ENCODE measurements at regions of chr6 and their contacts with region 1.

Region 1: DNA sequence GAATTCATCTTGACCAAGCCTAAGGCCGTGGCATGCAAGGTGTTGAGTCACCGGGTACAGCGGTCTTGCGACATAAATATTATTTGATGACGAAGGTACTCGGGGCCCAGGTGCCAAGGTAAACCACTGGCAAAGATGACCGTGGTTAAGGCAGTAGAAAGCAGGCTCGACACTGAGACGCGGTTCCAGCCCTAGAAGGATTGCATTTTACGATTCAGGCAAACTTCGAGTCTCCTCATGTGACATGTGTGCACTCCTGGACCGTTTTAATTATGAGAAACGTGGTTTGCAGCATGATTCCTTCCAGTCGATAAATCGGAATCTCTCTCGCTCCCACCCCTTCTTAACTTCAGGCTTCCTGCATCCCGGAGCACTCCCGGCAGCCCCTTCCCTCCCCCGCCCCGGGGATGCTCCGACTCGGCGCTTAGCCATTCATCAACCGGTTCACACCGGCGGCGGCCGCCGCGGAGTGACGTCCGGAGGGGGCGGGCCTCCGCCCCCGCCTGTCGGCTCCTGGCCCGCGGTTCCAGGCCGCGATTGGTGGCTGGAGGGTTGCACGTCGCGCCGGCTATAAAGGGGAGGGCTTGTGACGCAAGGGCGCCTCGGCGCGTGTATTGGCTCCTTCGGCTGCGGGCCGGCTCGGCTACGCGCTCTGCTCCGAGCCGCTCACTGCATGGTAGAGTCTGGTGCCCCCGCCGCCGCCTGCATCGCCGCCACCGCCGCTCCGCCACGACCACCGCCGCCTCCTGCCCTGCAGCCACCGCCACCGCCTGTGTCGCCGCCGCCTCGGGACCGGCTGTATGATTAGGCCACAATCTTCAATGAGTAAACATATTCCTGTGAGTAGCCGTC is at the starts of genes LOC128125822 and PTP4A1:
- DNase-seq: peak; percentile 96
- H3K4me3 Mint-ChIP-seq: peak within 1 kb of the TSS; percentile 95
- H3K27ac Mint-ChIP-seq: peak within 1 kb of the TSS; percentile 95
- H3K4me1 Mint-ChIP-seq: peaks cover 36% of the 10 kb centered on the region
- H3K27me3 Mint-ChIP-seq: no peaks in the 10 kb centered on the region
- total RNA-seq, gene PTP4A1: 80.0 and 84.7 TPM in 2 replicates

Region 2: DNA sequence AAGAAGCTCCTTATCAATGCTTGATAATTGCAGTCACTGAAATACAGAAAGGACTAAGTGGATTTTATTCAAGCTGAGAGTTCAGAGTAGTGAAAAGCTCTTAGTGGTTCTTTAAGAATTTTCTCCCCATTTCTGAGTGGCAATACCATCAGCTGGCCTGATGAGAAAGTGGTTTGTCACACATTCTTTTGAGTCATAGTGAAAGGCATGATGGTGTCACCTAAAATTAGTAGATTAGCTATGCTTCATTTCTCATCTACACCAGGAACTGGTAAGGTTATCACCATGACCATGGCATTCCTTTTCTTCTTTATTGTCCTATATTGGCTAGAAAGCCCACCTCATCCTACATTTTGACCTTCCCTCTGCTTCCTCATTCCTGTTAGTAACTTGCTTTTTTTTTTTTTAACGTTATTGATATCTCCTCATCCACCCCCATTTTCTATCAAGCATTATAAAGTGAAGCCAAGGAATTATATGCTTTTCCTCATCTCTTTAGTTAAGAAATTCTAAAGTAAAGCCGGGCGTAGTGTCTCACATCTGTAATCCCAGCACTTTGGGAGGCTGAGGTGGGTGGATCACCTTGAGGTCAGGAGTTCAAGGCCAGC is 67.2 kb before region 1 on chr6:
- intact Hi-C with region 1: loop called (anchors 1 kb)
- DNase-seq: no peak
- H3K4me3 Mint-ChIP-seq: no peak overlapping the region
- H3K27ac Mint-ChIP-seq: peak overlapping the region; percentile 19
- H3K4me1 Mint-ChIP-seq: peaks cover 7% of the 10 kb centered on the region
- H3K27me3 Mint-ChIP-seq: peaks cover 2% of the 10 kb centered on the region

Region 3: DNA sequence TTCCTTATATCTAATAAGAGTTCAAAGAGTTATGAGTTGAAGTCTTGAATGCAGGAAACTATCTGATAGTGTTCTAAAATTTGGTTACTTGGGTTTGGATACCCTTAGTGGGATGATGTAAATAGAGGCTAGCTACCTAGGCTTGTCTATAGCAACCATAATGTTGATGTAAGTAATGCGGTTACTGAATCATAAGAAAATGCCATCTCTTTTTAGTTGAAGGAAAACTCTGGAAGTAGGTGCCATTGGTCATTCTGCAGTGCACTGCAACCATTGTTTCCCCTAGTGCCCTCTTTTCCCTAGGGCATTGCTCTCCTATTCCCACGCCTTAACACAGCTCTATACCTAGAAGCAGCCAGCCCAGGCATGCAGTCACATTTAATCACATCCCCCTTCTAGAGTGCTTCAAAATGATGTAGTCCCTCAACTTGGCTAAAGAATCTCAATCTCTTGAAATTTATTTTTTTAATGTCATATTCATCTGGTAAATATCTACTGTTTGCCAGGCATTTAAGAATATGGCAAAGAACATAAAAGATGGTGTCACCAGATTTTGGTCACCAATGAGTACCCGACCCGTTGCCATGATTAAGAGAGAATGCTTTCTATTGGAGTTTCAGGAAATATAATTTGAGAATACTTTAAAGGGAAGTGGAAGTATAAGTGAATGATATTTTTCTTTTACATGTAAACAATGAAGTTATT is 10.6 kb after region 1 on chr6:
- intact Hi-C with region 1: loop called (anchors 1 kb)
- DNase-seq: no peak
- H3K4me3 Mint-ChIP-seq: no peak overlapping the region
- H3K27ac Mint-ChIP-seq: no peak overlapping the region
- H3K4me1 Mint-ChIP-seq: no peaks in the 10 kb centered on the region
- H3K27me3 Mint-ChIP-seq: peaks cover under 1% of the 10 kb centered on the region

Region 4: DNA sequence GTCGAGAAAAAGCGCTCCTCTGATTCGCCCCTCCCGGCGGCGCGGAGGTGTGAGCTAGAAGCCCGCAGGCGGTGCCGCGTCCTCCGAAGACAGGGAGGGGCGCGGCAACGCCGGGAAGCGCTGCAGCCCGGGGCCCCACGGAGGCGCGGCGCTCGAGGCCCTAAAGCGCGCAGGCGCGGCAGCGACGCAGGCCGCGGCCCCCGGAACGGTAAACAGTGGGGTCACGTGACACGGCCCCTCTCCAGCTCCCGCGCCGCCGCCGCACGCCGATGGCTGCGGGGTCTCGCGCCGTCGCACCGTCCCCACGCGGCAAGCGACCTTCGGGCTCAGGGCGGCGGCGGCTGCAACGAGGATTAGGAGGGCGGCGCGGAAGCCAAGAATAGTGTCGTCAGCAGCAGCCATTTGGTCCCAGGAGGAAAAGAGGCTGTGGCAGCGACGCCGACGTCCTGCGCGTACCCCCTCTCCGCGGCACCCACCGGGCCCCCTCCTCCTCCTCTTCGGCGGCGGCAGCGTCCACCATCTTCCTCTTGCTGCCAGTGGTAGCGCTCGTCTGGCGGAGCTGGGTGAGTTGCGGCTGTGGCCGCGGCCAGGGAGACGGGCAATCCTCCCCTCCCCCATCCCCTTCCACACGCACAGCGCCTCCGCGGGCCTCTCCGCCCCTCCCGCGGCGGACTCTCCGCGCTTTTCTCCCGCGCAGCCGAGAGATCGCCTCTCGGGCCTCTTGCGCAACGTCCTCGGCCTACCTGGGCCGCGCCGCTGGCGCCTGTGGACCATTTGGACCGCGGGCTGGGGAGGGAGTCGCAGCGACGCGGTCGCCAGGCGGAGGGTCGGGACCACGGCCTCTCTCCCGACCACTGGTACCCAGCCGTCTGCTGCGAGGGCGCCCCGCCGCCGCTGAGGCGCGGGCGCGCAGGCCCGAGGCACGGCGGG is 63.7 kb after region 1 on chr6 and contains the start of gene PHF3:
- intact Hi-C with region 1: loop called (anchors 1 kb)
- DNase-seq: peak; percentile 86
- H3K4me3 Mint-ChIP-seq: peak within 1 kb of the TSS; percentile 100
- H3K27ac Mint-ChIP-seq: peak within 1 kb of the TSS; percentile 98
- H3K4me1 Mint-ChIP-seq: peaks cover 52% of the 10 kb centered on the region
- H3K27me3 Mint-ChIP-seq: no peaks in the 10 kb centered on the region
- total RNA-seq, gene PHF3: 42.7 and 45.3 TPM in 2 replicates

Measured in activated T-helper 1 cell treated with anti-CD3 and anti-CD28 coated beads, Interleukin-12 subunit alpha, Interleukin-12 subunit beta, Interleukin-2, Interleukin-4 antibody, amounts not matched to agents 30 ng/mL and 10 ng/mL and 1 ng/mL, durations not matched to agents 14 hours and 24 hours and 36 hours (primary cell).